CD4-positive, alpha-beta memory T cell (primary cell): ENCODE measurements at regions of chr6 and their contacts with region 1.

Region 1: DNA sequence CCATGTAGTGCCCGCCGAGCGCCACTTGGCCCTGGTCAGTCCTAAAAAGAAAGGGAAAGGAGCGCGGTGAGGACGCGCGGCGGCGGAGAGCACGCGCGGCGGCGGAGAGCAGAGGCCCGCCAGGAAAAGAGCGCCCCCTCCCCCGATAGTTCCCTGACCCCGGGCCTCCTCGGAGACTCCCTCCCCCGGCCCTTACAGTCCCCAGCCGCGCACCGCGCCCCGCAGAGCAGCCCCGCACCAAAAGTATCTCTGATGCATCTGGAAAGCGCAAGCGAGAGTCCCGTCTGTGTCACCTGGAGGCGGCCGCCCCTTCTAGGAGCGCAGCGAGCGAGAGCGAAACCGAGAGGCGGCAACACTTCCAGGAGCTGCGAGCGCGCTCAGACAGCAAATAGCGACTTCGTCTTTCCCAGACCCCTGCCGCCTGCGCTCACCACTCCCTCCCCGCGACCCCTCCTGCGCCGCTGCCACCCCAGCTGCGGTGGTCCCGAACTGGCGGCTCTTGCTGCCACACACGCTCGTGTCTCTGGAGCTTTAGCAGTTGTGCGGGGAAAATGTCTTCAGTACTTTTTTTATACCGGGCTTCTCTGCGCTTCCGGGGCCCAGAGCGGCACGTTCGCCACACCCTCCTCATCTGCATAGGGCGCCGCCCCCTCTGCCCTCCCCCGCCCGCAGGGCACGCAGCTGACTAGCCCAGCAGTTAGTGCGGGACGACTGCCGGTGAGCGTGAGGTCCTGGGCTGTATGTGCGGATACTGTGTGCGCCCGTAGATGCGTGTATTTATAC is at the start of gene TENT5A:
- DNase-seq: peak; percentile 82 to 89 (median 84)
- H3K4me3 ChIP-seq: peak within 1 kb of the TSS; percentile 76 to 81
- H3K4me3 Mint-ChIP-seq: peak within 1 kb of the TSS; percentile 94 to 98 (median 96)
- H3K27ac ChIP-seq: peak within 1 kb of the TSS; percentile 66
- H3K27ac Mint-ChIP-seq: peak within 1 kb of the TSS; percentile 89 to 96 (median 94)
- H3K4me1 ChIP-seq: peaks cover 19% of the 10 kb centered on the region
- H3K4me1 Mint-ChIP-seq: peaks cover 18 to 49% (median 33%) of the 10 kb centered on the region in 4 donors
- H3K27me3 ChIP-seq: no peaks in the 10 kb centered on the region
- H3K27me3 Mint-ChIP-seq: peaks cover 5 to 11% of the 10 kb centered on the region in 2 donors
- total RNA-seq, gene TENT5A: 5.8 to 6.6 TPM

Region 2: GRCh38 chr6:79777713-79778579 is 1974.4 kb before region 1 on chr6:
- CTCF ChIA-PET with region 1: no interaction called
- POLR2A ChIA-PET with region 1: no interaction called
- intact Hi-C with region 1: loop called (anchors 2 kb)
- DNase-seq: peak; percentile 79 to 82 (median 81)
- H3K4me3 ChIP-seq: peak overlapping the region; percentile 11 to 67
- H3K4me3 Mint-ChIP-seq: peak overlapping the region; percentile 79 to 87 (median 80)
- H3K27ac ChIP-seq: no peak overlapping the region
- H3K27ac Mint-ChIP-seq: peak overlapping the region in 6 of 7 donors; percentile 23 to 65 (median 58)
- H3K4me1 ChIP-seq: peaks cover 7% of the 10 kb centered on the region
- H3K4me1 Mint-ChIP-seq: peaks cover 4 to 11% (median 8%) of the 10 kb centered on the region in 4 donors
- H3K27me3 ChIP-seq: no peaks in the 10 kb centered on the region
- H3K27me3 Mint-ChIP-seq: no peaks in the 10 kb centered on the region

Region 3: GRCh38 chr6:80004173-80005072 is 1747.9 kb before region 1 on chr6 and contains the start of gene TTK:
- CTCF ChIA-PET with region 1: no interaction called
- POLR2A ChIA-PET with region 1: interaction called, 10 read pairs
- intact Hi-C with region 1: loop called (anchors 2 kb)
- DNase-seq: peak; percentile 93 to 96 (median 94)
- H3K4me3 ChIP-seq: peak within 1 kb of the TSS; percentile 42 to 95
- H3K4me3 Mint-ChIP-seq: peak within 1 kb of the TSS; percentile 88 to 97 (median 94)
- H3K27ac ChIP-seq: peak within 1 kb of the TSS; percentile 81
- H3K27ac Mint-ChIP-seq: peak within 1 kb of the TSS; percentile 89 to 99 (median 98)
- H3K4me1 ChIP-seq: peaks cover 25% of the 10 kb centered on the region
- H3K4me1 Mint-ChIP-seq: peaks cover 15 to 25% (median 20%) of the 10 kb centered on the region in 4 donors
- H3K27me3 ChIP-seq: no peaks in the 10 kb centered on the region
- H3K27me3 Mint-ChIP-seq: peaks cover 2 to 3% of the 10 kb centered on the region in 2 donors
- total RNA-seq, gene TTK: 0.61 to 0.87 TPM

Region 4: GRCh38 chr6:80214436-80215022 is 1537.8 kb before region 1 on chr6:
- CTCF ChIA-PET with region 1: interaction called, 3 read pairs
- POLR2A ChIA-PET with region 1: no interaction called
- intact Hi-C with region 1: loop called (anchors 2 kb)
- DNase-seq: peak in 3 of 5 donors; percentile 3 to 11 (median 9)
- H3K4me3 ChIP-seq: no peak overlapping the region
- H3K4me3 Mint-ChIP-seq: no peak overlapping the region
- H3K27ac ChIP-seq: no peak overlapping the region
- H3K27ac Mint-ChIP-seq: peak overlapping the region in 2 of 7 donors; percentile 6 to 46
- H3K4me1 ChIP-seq: no peaks in the 10 kb centered on the region
- H3K4me1 Mint-ChIP-seq: no peaks in the 10 kb centered on the region
- H3K27me3 ChIP-seq: no peaks in the 10 kb centered on the region
- H3K27me3 Mint-ChIP-seq: no peaks in the 10 kb centered on the region

Region 5: GRCh38 chr6:82247634-82248232 is 495.4 kb after region 1 on chr6 and contains the start of gene IBTK:
- CTCF ChIA-PET with region 1: no interaction called
- POLR2A ChIA-PET with region 1: no interaction called
- intact Hi-C with region 1: loop called (anchors 5 kb)
- DNase-seq: peak; percentile 91 to 96 (median 92)
- H3K4me3 ChIP-seq: peak within 1 kb of the TSS; percentile 52 to 91
- H3K4me3 Mint-ChIP-seq: peak within 1 kb of the TSS; percentile 95 to 99 (median 98)
- H3K27ac ChIP-seq: peak within 1 kb of the TSS; percentile 88
- H3K27ac Mint-ChIP-seq: peak within 1 kb of the TSS; percentile 95 to 99 (median 98)
- H3K4me1 ChIP-seq: peaks cover 42% of the 10 kb centered on the region
- H3K4me1 Mint-ChIP-seq: peaks cover 26 to 53% (median 38%) of the 10 kb centered on the region in 4 donors
- H3K27me3 ChIP-seq: no peaks in the 10 kb centered on the region
- H3K27me3 Mint-ChIP-seq: no peaks in the 10 kb centered on the region
- total RNA-seq, gene IBTK: 28.9 to 29.5 TPM